ENCODE measurements at regions of chr5 and their contacts with region 1.

Region 1: GRCh38 chr5:74640450-74640953 is at the start of gene ENC1:
- DNase-seq: peak; percentile 93
- H3K4me3 ChIP-seq: peak within 1 kb of the TSS; percentile 68
- H3K27ac ChIP-seq: peak within 1 kb of the TSS; percentile 62
- H3K4me1 ChIP-seq: peaks cover 28% of the 10 kb centered on the region
- H3K27me3 ChIP-seq: no peaks in the 10 kb centered on the region
- CTCF ChIP-seq: peak; percentile 53
- total RNA-seq, gene ENC1: 6.3 and 7.9 TPM in 2 replicates

Region 2: GRCh38 chr5:73591102-73591695 is 1049.3 kb before region 1 on chr5:
- CTCF ChIA-PET with region 1: interaction called, 4 read pairs
- POLR2A ChIA-PET with region 1: no interaction called
- intact Hi-C with region 1: loop called (anchors 2 kb)
- DNase-seq: peak; percentile 84
- H3K4me3 ChIP-seq: no peak overlapping the region
- H3K27ac ChIP-seq: no peak overlapping the region
- H3K4me1 ChIP-seq: no peaks in the 10 kb centered on the region
- H3K27me3 ChIP-seq: no peaks in the 10 kb centered on the region
- CTCF ChIP-seq: peak; percentile 83

Region 3: DNA sequence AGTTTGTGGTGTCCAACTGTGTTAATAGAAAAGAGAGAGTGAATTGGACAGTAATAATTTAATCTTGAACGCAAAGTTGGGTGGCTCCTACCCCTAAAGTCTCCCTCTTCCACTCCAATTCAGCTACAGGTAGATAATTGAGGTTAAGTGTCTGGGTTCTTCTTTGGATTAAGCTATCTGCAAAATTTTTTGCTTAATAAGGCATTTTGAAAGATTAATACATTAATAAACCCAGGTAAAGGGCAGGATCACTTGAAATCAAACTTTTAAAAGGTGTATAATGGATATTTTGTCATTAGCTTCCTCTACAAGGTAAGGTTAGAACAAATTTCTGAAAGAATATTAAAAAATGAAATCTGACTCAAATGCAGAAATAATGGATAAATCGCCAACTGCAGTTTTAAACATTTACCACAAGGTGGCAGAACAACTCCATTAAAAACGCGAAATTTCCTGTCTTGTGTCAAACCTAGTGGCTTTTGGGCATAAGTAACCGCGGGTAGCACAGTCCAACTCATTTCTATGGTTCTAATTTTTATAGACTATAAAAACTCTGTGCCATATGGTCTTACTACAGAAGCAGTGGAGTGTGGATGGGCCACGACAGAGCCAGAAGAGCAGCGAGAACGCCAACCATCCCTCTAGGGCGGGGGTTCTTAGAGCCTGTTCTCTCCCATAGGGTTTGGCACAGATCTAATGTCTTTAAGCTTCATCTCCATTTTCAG is 738.0 kb before region 1 on chr5:
- CTCF ChIA-PET with region 1: no interaction called
- POLR2A ChIA-PET with region 1: no interaction called
- intact Hi-C with region 1: loop called (anchors 2 kb)
- DNase-seq: peak; percentile 71
- H3K4me3 ChIP-seq: no peak overlapping the region
- H3K27ac ChIP-seq: no peak overlapping the region
- H3K4me1 ChIP-seq: no peaks in the 10 kb centered on the region
- H3K27me3 ChIP-seq: peaks cover 97% of the 10 kb centered on the region
- CTCF ChIP-seq: peak; percentile 81

Region 4: GRCh38 chr5:74127381-74128320 is 512.9 kb before region 1 on chr5:
- CTCF ChIA-PET with region 1: no interaction called
- POLR2A ChIA-PET with region 1: interaction called, 3 read pairs
- intact Hi-C with region 1: loop called (anchors 10 kb)
- DNase-seq: no peak
- H3K4me3 ChIP-seq: no peak overlapping the region
- H3K27ac ChIP-seq: no peak overlapping the region
- H3K4me1 ChIP-seq: peaks cover 3% of the 10 kb centered on the region
- H3K27me3 ChIP-seq: peaks cover 32% of the 10 kb centered on the region
- CTCF ChIP-seq: no peak

Region 5: DNA sequence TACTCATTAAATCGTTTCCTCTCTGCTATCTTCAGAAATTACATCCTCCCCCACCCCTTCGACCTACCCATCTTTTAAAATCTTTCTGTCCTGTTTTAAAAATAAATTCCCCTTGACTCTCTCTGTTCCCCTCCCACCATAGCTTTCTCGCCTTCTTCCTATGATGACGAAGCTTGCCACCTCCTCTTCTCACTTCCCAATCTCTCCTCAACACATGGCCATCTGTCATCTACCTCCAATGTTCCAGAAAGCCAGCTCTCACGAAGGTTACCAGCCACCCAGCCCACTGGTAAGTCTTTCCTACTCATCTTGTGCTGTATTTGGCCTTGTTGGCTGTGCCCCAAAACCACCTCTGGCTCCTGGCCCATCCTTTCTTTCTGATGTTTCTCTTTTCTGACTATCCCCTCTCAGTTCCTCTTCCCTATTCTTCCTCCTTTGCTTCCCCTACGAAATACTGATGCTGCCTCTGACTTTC is 346.2 kb before region 1 on chr5:
- CTCF ChIA-PET with region 1: no interaction called
- POLR2A ChIA-PET with region 1: no interaction called
- intact Hi-C with region 1: loop called (anchors 10 kb)
- DNase-seq: no peak
- H3K4me3 ChIP-seq: no peak overlapping the region
- H3K27ac ChIP-seq: no peak overlapping the region
- H3K4me1 ChIP-seq: no peaks in the 10 kb centered on the region
- H3K27me3 ChIP-seq: peaks cover 27% of the 10 kb centered on the region
- CTCF ChIP-seq: no peak

Region 6: DNA sequence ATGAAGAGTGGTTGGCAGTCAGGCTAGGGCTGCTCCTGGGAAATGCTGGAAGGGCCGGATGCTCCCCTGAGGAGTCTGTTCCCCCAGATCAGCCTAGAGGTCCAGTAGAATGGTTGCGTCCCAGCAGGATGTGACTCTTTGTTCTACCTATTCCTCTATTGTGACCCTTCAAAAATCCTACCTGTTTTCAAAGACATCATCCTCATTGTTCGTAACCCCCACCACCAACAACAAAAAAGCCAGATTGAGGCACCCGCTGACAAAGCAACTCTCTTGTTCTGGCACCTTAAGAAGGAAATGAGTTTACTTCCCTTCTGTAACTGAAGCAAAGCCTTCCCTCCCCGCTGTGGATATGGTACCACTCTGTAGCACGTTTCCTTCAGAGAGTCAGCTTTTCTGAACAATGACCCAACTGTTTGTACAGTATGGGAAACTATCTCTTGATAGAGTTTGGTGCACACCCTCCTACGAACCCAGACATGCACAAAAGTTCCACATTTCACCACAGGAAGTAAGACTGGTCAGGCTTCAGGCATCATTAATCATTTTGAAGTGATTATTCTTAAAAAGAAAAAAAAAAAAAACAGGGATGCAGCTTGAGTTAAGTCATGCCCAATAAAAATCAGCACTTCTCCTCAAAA is 207.1 kb before region 1 on chr5:
- CTCF ChIA-PET with region 1: no interaction called
- POLR2A ChIA-PET with region 1: no interaction called
- intact Hi-C with region 1: loop called (anchors 5 kb)
- DNase-seq: peak; percentile 91
- H3K4me3 ChIP-seq: peak overlapping the region; percentile 8
- H3K27ac ChIP-seq: peak overlapping the region; percentile 59
- H3K4me1 ChIP-seq: peaks cover 30% of the 10 kb centered on the region
- H3K27me3 ChIP-seq: no peaks in the 10 kb centered on the region
- CTCF ChIP-seq: no peak

Region 7: GRCh38 chr5:74575732-74576538 is 64.6 kb before region 1 on chr5:
- CTCF ChIA-PET with region 1: interaction called, 19 read pairs
- POLR2A ChIA-PET with region 1: no interaction called
- intact Hi-C with region 1: no loop called
- DNase-seq: peak; percentile 77
- H3K4me3 ChIP-seq: no peak overlapping the region
- H3K27ac ChIP-seq: no peak overlapping the region
- H3K4me1 ChIP-seq: peaks cover 10% of the 10 kb centered on the region
- H3K27me3 ChIP-seq: no peaks in the 10 kb centered on the region
- CTCF ChIP-seq: no peak

Region 8: DNA sequence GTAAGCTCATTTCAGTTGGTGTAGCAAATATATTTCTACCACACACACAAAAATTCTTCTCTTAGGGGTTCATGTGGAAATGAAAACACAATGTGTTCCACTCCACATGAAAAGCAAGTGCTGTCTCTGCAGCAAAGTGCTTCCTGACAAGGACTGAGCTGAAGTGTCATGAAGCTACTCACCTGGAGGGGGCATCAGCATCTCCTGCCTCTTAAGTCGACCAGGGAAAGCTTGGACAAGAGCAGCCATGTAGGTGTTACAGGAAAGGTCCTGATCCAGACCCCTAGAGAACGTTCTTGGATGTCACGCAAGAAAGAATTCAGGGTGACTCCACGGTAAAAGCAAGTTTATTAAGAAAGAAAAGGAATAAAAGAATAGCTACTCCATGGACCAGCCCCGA is 1505.4 kb after region 1 on chr5:
- CTCF ChIA-PET with region 1: no interaction called
- POLR2A ChIA-PET with region 1: no interaction called
- intact Hi-C with region 1: no loop called
- DNase-seq: peak; percentile 42
- H3K4me3 ChIP-seq: no peak overlapping the region
- H3K27ac ChIP-seq: no peak overlapping the region
- H3K4me1 ChIP-seq: no peaks in the 10 kb centered on the region
- H3K27me3 ChIP-seq: no peaks in the 10 kb centered on the region
- CTCF ChIP-seq: peak; percentile 50